Activated CD8-positive, alpha-beta memory T cell treated with anti-CD3 and anti-CD28 coated beads, Interleukin-2, amount 10 ng/mL, durations not matched to agents 7 days and 5 days (primary cell): ENCODE measurements at regions of chr6 and their contacts with region 1.

Region 1: DNA sequence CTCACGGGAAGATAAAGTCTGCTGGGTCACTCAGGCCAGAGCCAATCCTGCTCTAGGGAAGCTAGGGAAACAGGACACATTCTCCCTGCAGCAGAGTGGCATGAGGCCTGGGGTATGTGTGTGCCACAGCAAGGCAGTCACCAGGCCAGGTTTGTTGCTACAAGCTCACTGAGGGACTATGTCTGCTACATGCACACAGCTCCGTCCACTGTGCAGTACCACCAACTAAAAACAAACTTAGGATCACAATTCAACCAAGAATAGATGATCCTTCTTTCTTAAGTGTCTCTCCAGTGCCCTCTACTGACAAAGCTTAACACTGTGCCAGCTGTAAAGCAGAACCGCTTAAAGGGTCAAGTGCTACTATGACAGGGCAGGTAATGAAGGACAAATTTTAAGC is 192.5 kb downstream of the PTPRK start:
- DNase-seq: peak; percentile 52
- ATAC-seq: peak; percentile 91
- H3K4me3 Mint-ChIP-seq: no peak overlapping the region
- H3K27ac Mint-ChIP-seq: no peak overlapping the region
- H3K4me1 Mint-ChIP-seq: no peaks in the 10 kb centered on the region
- H3K27me3 Mint-ChIP-seq: peaks cover 3% of the 10 kb centered on the region

Region 2: DNA sequence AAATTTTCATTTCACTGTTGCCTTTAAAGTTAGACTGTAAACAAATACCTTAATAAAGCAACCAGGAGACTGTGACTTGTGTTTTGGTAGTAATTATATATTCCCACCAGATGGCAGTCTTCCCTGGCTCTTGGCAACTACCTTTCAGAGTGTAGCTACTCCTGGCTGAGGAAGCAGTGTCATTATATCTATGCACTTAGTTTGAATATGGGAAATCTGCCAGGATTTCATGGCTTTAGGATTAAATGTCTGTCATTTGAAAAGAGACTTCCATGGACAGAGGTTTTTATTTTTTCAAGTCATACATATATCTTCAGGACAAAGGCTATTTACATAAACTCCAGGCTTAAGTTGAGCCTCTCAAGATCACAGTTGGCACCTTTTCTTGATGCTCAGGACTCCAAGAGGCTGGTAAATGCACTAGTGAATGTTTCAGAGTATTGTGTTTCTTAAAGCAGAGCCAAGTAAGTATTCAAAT is 590.8 kb before region 1 on chr6:
- CTCF ChIA-PET with region 1: interaction called, 10 read pairs
- DNase-seq: peak; percentile 52
- ATAC-seq: peak; percentile 94
- H3K4me3 Mint-ChIP-seq: no peak overlapping the region
- H3K27ac Mint-ChIP-seq: no peak overlapping the region
- H3K4me1 Mint-ChIP-seq: peaks cover 18% of the 10 kb centered on the region
- H3K27me3 Mint-ChIP-seq: no peaks in the 10 kb centered on the region

Region 3: DNA sequence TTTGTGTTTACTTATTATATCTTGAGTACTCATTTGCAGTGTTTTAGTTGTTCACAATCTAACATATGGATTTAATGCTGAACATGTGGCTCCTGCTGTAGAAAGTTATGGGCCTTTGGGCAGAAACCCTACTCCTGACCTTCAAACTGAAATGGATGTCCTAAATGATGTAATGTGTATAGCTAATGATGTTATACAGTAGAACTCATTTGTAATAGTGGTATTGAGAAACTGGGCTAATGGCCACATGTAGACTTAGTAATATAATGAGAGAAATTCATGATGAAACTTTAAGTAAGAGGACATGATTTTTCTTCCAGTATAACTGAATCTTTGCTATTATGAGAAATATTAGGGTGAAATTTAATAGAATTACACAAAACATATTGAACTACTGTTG is 313.8 kb after region 1 on chr6:
- CTCF ChIA-PET with region 1: no interaction called
- DNase-seq: no peak
- ATAC-seq: no peak
- H3K4me3 Mint-ChIP-seq: no peak overlapping the region
- H3K27ac Mint-ChIP-seq: no peak overlapping the region
- H3K4me1 Mint-ChIP-seq: no peaks in the 10 kb centered on the region
- H3K27me3 Mint-ChIP-seq: peaks cover 2% of the 10 kb centered on the region